GM12878 (cell line): ENCODE measurements at regions of chr20 and their contacts with region 1.

Region 1: GRCh38 chr20:5529331-5530148 is 212.8 kb upstream of the PROKR2 start:
- DNase-seq: peak; percentile 26
- ATAC-seq: peak; percentile 96
- H3K4me3 ChIP-seq: no peak overlapping the region
- H3K27ac ChIP-seq: no peak overlapping the region
- H3K4me1 ChIP-seq: peaks cover 3% of the 10 kb centered on the region; the same call in 1 of the 2 replicates
- H3K27me3 ChIP-seq: no peaks in the 10 kb centered on the region
- CTCF ChIP-seq: peak; percentile 93 to 97 (median 93)
- EP300 ChIP-seq: no peak
- POLR2A ChIP-seq: no peak
- RAD21 ChIP-seq: peak; percentile 92

Region 2: DNA sequence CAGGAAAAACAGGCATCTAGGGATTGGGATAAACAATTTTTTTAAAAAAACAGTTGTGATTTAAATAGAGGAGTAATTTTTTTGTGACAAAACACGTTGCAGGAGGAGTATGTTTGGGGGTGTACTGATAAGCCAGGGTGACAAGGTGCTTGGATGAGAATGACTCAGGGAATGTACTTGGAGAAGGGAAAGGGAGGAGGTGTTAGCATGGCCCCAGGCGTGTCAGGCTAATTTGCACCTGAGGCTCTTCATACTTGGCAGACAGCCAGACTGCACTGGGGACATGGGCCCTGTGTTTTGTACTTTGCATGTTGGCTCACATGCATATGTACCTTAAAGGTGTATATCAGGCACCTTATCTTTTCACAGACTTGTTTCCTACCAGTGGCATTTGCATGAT is 1617.6 kb before region 1 on chr20:
- CTCF ChIA-PET with region 1: no interaction called
- POLR2A ChIA-PET with region 1: no interaction called
- RAD21 ChIA-PET with region 1: no interaction called
- SMC1A ChIA-PET with region 1: no interaction called
- in situ Hi-C with region 1: no loop called
- intact Hi-C with region 1: no loop called
- DNase-seq: no peak
- ATAC-seq: no peak
- H3K4me3 ChIP-seq: no peak overlapping the region
- H3K27ac ChIP-seq: no peak overlapping the region
- H3K4me1 ChIP-seq: peaks cover 26% of the 10 kb centered on the region
- H3K27me3 ChIP-seq: no peaks in the 10 kb centered on the region
- CTCF ChIP-seq: no peak
- EP300 ChIP-seq: no peak
- POLR2A ChIP-seq: 0 out of 2 replicates have a peak, but pooled peaks have one; percentile 21
- RAD21 ChIP-seq: no peak

Region 3: GRCh38 chr20:5513975-5514516 is 15.5 kb before region 1 on chr20:
- CTCF ChIA-PET with region 1: interaction called, 14 read pairs
- POLR2A ChIA-PET with region 1: no interaction called
- RAD21 ChIA-PET with region 1: no interaction called
- SMC1A ChIA-PET with region 1: no interaction called
- in situ Hi-C with region 1: no loop called
- intact Hi-C with region 1: no loop called
- DNase-seq: no peak
- ATAC-seq: no peak
- H3K4me3 ChIP-seq: no peak overlapping the region
- H3K27ac ChIP-seq: no peak overlapping the region
- H3K4me1 ChIP-seq: no peaks in the 10 kb centered on the region
- H3K27me3 ChIP-seq: no peaks in the 10 kb centered on the region; a peak in 1 of 4 replicates
- CTCF ChIP-seq: no peak
- EP300 ChIP-seq: no peak
- POLR2A ChIP-seq: no peak
- RAD21 ChIP-seq: no peak

Region 4: GRCh38 chr20:5557123-5557522 is 27.6 kb after region 1 on chr20:
- CTCF ChIA-PET with region 1: interaction called, 17 read pairs
- POLR2A ChIA-PET with region 1: no interaction called
- RAD21 ChIA-PET with region 1: interaction called, 10 read pairs
- SMC1A ChIA-PET with region 1: interaction called, 9 read pairs
- in situ Hi-C with region 1: no loop called
- intact Hi-C with region 1: no loop called
- DNase-seq: peak; percentile 15
- ATAC-seq: peak; percentile 85
- H3K4me3 ChIP-seq: no peak overlapping the region
- H3K27ac ChIP-seq: no peak overlapping the region; the same call in 1 of the 2 replicates
- H3K4me1 ChIP-seq: no peaks in the 10 kb centered on the region
- H3K27me3 ChIP-seq: no peaks in the 10 kb centered on the region
- CTCF ChIP-seq: peak; percentile 52 to 71 (median 65); a peak in 5 of 6 replicates
- EP300 ChIP-seq: no peak
- POLR2A ChIP-seq: no peak
- RAD21 ChIP-seq: peak; percentile 75

Region 5: GRCh38 chr20:5797843-5798462 is 268.4 kb after region 1 on chr20:
- CTCF ChIA-PET with region 1: interaction called, 22 read pairs
- POLR2A ChIA-PET with region 1: interaction called, 6 read pairs
- RAD21 ChIA-PET with region 1: interaction called, 10 read pairs
- SMC1A ChIA-PET with region 1: interaction called, 8 read pairs
- in situ Hi-C with region 1: no loop called
- intact Hi-C with region 1: no loop called
- DNase-seq: peak; percentile 86
- ATAC-seq: peak; percentile 98
- H3K4me3 ChIP-seq: no peak overlapping the region
- H3K27ac ChIP-seq: peak overlapping the region; percentile 92
- H3K4me1 ChIP-seq: peaks cover 15% of the 10 kb centered on the region
- H3K27me3 ChIP-seq: no peaks in the 10 kb centered on the region
- CTCF ChIP-seq: no peak
- EP300 ChIP-seq: no peak
- POLR2A ChIP-seq: no peak; the same call in 1 of the 2 replicates
- RAD21 ChIP-seq: no peak

Region 6: DNA sequence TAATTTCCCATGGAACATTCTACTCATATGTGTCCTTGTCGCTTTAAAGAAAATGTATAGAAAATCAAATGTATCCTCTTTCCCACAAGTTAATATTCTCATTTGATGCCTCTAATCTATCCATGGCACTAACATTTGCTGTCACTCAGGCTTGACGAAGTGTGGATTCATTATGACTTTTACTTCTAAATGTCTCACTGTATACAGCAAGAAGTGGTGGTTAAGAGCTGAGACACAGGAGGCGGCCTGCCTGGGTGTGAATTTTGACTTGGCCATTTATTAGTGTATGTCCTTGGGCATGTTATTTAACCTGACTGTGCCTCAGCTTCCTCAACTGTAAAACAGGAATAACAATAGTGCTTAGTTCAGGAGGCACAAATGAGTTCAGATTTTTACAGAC is 350.8 kb after region 1 on chr20:
- CTCF ChIA-PET with region 1: interaction called, 14 read pairs
- POLR2A ChIA-PET with region 1: no interaction called
- RAD21 ChIA-PET with region 1: no interaction called
- SMC1A ChIA-PET with region 1: no interaction called
- in situ Hi-C with region 1: no loop called
- intact Hi-C with region 1: no loop called
- DNase-seq: no peak
- ATAC-seq: peak; percentile 45
- H3K4me3 ChIP-seq: no peak overlapping the region
- H3K27ac ChIP-seq: no peak overlapping the region
- H3K4me1 ChIP-seq: no peaks in the 10 kb centered on the region
- H3K27me3 ChIP-seq: peaks cover 0 to 6% of the 10 kb centered on the region in 2 experiments; a peak in 3 of 4 replicates
- CTCF ChIP-seq: no peak
- EP300 ChIP-seq: no peak
- POLR2A ChIP-seq: no peak
- RAD21 ChIP-seq: no peak

Region 7: GRCh38 chr20:5950271-5951031 is 420.9 kb after region 1 on chr20 and contains the starts of genes MCM8 and TRMT6:
- CTCF ChIA-PET with region 1: interaction called, 12 read pairs
- POLR2A ChIA-PET with region 1: interaction called, 3 read pairs
- RAD21 ChIA-PET with region 1: interaction called, 6 read pairs
- SMC1A ChIA-PET with region 1: interaction called, 11 read pairs
- in situ Hi-C with region 1: no loop called
- intact Hi-C with region 1: no loop called
- DNase-seq: peak; percentile 83
- ATAC-seq: peak; percentile 91
- H3K4me3 ChIP-seq: peak within 1 kb of the TSS; percentile 92
- H3K27ac ChIP-seq: peak within 1 kb of the TSS; percentile 86
- H3K4me1 ChIP-seq: no peaks in the 10 kb centered on the region
- H3K27me3 ChIP-seq: no peaks in the 10 kb centered on the region
- CTCF ChIP-seq: no peak
- EP300 ChIP-seq: no peak; a peak in 1 of 4 replicates
- POLR2A ChIP-seq: peak; percentile 92
- RAD21 ChIP-seq: no peak
- polyA plus RNA-seq, gene MCM8: 3.2 to 5.5 TPM
- polyA plus RNA-seq, gene TRMT6: 18.2 to 21.1 TPM

Region 8: GRCh38 chr20:6008254-6008653 is 478.7 kb after region 1 on chr20:
- CTCF ChIA-PET with region 1: interaction called, 18 read pairs
- POLR2A ChIA-PET with region 1: no interaction called
- RAD21 ChIA-PET with region 1: interaction called, 8 read pairs
- SMC1A ChIA-PET with region 1: interaction called, 9 read pairs
- in situ Hi-C with region 1: loop called (anchors 5 kb)
- intact Hi-C with region 1: loop called (anchors 1 kb)
- DNase-seq: no peak
- ATAC-seq: no peak
- H3K4me3 ChIP-seq: peak overlapping the region; percentile 12; the same call in 1 of the 2 replicates
- H3K27ac ChIP-seq: no peak overlapping the region; the same call in 1 of the 2 replicates
- H3K4me1 ChIP-seq: peaks cover 2% of the 10 kb centered on the region; the same call in 1 of the 2 replicates
- H3K27me3 ChIP-seq: no peaks in the 10 kb centered on the region
- CTCF ChIP-seq: no peak
- EP300 ChIP-seq: no peak
- POLR2A ChIP-seq: no peak
- RAD21 ChIP-seq: no peak